ENCODE measurements at regions of chrX and their contacts with region 1.

Region 1: DNA sequence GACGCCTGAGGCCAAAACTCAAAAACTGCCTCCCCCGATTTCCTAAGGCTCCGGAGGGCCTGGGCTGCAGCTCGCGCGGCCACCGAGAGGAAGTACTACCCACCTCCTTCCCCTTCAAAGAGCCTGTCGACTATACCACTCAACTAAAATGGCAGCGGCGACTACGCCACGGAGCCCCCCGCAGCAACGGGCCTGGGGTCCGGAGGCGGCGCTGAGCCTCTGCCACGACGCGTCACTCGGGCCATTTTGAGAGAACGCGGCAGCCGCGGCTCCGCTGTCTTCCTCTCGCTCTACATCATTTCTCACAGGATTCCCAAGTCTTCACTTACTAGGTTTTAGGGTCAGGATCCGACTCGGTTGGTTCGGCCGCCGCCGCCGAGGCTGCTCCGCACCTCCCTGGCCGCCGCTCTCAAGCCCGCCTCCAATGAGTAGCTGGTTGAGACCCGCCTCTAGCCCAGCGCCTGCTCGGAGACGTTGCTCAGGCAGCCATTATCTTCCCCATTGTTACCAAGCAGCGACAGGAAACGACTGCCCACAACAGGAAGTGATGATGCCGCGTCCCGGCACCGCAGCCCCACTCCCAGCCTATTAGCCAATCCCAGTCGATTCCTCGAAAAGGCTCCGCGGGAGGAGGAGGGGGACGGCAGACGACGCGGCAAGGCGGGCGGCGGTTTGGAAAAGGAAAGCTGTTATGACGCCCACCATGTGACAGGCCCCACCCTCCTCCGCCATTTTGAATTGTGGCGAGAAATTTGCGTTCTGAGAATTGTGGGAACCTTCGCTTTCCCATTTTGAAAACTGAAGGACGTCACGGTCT is at the start of gene RLIM:
- DNase-seq: peak; percentile 83
- ATAC-seq: peak; percentile 99
- H3K4me3 ChIP-seq: peak within 1 kb of the TSS; percentile 82 to 89
- H3K27ac ChIP-seq: peak within 1 kb of the TSS; percentile 96
- H3K4me1 ChIP-seq: peaks cover 5% of the 10 kb centered on the region; the same call in 1 of the 2 replicates
- H3K27me3 ChIP-seq: no peaks in the 10 kb centered on the region
- CTCF ChIP-seq: no peak
- total RNA-seq, gene RLIM: 50.6 TPM

Region 2: GRCh38 chrX:74492720-74493201 is 121.5 kb before region 1 on chrX:
- CTCF ChIA-PET with region 1: no interaction called
- POLR2A ChIA-PET with region 1: no interaction called
- in situ Hi-C with region 1: no loop called
- intact Hi-C with region 1: no loop called
- DNase-seq: no peak
- ATAC-seq: peak; percentile 68; the same call in 1 of the 2 replicates
- H3K4me3 ChIP-seq: no peak overlapping the region
- H3K27ac ChIP-seq: no peak overlapping the region
- H3K4me1 ChIP-seq: no peaks in the 10 kb centered on the region
- H3K27me3 ChIP-seq: no peaks in the 10 kb centered on the region
- CTCF ChIP-seq: no peak; the same call in 1 of the 2 replicates

Region 3: GRCh38 chrX:75273483-75273882 is 659.2 kb after region 1 on chrX:
- CTCF ChIA-PET with region 1: no interaction called
- POLR2A ChIA-PET with region 1: interaction called, 10 read pairs
- in situ Hi-C with region 1: no loop called
- intact Hi-C with region 1: no loop called
- DNase-seq: no peak
- ATAC-seq: peak; percentile 40; the same call in 1 of the 2 replicates
- H3K4me3 ChIP-seq: peak overlapping the region; percentile 84 to 93
- H3K27ac ChIP-seq: peak overlapping the region; percentile 39; the same call in 1 of the 2 replicates
- H3K4me1 ChIP-seq: peaks cover 8% of the 10 kb centered on the region; the same call in 1 of the 2 replicates
- H3K27me3 ChIP-seq: no peaks in the 10 kb centered on the region
- CTCF ChIP-seq: no peak

Region 4: DNA sequence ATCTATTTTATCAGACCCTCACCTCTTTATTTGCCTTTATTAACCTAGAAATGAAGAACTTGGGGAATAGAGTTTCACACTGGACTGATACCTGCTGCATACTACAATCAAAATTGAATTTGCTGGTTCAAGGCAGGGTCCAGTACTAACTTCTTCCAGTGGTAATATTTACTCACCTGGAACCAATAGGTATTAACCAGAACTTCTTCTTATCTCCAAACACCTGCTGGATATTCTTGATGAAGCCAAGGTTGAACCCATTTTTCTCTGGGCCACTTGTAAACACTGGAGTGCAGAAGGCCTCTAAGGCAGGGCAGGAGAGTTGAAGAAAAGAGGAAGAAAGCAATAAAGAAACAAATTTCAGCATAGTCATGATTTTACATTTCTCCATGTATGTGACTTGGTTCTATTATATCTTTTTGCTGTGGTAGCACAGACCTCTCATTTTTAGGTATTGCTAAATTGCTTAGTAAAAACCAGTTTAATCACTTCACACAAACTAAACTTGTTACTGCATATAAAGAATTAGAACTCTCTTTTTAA is 807.5 kb after region 1 on chrX:
- CTCF ChIA-PET with region 1: no interaction called
- POLR2A ChIA-PET with region 1: interaction called, 22 read pairs
- in situ Hi-C with region 1: no loop called
- intact Hi-C with region 1: no loop called
- DNase-seq: no peak
- ATAC-seq: no peak
- H3K4me3 ChIP-seq: no peak overlapping the region
- H3K27ac ChIP-seq: no peak overlapping the region
- H3K4me1 ChIP-seq: no peaks in the 10 kb centered on the region
- H3K27me3 ChIP-seq: no peaks in the 10 kb centered on the region
- CTCF ChIP-seq: no peak

Region 5: DNA sequence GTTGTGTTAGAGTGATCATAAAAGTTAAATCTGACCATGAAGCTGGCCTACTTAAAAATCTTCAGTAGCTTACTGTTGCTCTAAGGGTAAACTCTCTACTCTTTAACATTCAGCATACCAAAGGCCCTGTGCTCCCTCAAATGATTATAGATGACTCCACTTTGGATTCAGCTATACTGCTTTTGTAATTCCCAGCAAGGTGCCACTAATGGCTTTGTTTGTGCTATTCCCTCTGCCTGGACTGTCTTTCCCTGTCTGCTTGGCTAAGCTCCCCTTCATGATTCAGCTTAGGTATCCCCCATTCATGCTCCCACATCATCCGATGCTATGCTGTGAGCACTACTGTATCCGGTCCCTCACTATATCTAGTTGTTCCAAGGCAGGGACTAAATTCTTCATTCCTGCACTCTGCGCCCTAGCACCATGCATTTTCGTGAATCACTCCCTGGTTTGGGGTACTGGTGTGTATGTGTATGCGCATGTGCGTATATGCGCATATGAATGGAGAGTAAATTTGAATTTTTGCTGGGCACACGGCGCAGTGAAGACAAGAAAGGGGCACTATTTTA is 1558.1 kb after region 1 on chrX:
- CTCF ChIA-PET with region 1: no interaction called
- POLR2A ChIA-PET with region 1: interaction called, 10 read pairs
- in situ Hi-C with region 1: no loop called
- intact Hi-C with region 1: no loop called
- DNase-seq: no peak
- ATAC-seq: peak; percentile 81
- H3K4me3 ChIP-seq: peak overlapping the region; percentile 53 to 82
- H3K27ac ChIP-seq: peak overlapping the region; percentile 91
- H3K4me1 ChIP-seq: peaks cover 12% of the 10 kb centered on the region
- H3K27me3 ChIP-seq: no peaks in the 10 kb centered on the region
- CTCF ChIP-seq: no peak